Panc1 (cell line): ENCODE measurements at regions of chr1 and their contacts with region 1.

Region 1: DNA sequence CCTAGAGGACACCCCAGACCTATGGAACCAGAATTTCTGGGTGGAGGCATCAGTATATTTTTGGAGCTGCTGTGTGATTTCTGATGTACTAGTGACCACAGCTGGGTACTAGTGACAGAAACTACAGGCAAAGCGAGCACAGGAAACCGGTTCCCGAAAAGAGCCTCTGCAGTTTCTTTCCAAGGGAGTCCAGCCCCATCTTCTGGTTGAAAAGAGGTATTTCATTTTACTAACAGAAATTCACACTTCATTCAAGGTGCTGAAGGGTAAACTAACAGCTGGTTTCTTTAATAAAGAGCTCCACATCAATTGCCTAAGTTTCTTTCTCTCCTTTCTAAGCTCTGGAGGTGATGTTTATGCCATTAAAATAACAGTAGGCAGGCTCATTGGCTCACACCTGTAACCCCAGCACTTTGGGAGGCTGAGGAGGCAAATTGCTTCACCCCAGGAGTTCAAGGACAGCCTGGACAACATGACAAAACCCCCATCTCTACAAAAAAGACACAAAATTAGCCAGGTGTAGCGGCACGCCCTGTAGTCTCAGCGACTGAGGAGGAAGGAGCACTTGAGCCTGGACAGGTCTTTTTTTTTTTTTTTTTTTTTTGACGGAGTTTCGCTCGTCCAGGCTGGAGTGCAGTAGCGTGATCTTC is 22.0 kb downstream of the THAP3 start:
- DNase-seq: no peak
- ATAC-seq: peak; percentile 51; the same call in 1 of the 2 replicates
- H3K4me3 ChIP-seq: no peak overlapping the region
- H3K27ac ChIP-seq: no peak overlapping the region
- H3K4me1 ChIP-seq: no peaks in the 10 kb centered on the region
- H3K27me3 ChIP-seq: no peaks in the 10 kb centered on the region
- CTCF ChIP-seq: no peak

Region 2: DNA sequence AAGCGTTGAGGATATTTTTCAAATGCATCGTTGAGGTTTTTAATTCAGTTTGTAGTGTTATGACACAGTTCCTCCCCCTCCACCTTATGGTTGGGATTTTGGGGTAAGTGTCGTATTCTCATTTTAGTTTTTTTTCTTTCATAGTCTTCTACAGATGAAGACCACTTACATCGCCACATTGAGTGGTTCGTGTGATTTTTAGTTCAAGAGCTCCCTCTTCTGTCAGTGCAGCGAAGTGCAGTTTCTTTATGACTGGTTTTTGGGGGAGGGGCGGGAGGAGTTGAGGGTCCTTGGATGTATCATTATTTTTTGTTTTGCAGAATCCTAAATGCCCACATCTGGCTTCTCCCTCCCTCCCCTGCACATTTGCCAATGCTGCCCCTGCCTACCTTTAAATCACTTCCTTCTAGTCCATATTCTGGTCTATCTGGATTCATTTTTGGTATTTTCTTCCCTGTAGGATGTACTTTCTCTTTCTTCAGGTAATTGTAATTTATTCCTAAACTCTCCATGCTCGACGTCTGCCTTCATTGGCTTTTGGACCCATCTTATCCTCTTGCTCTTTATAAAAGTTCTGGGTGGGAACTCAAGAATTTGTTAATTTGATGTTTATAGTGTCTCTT is 571.7 kb after region 1 on chr1:
- CTCF ChIA-PET with region 1: no interaction called
- POLR2A ChIA-PET with region 1: interaction called, 14 read pairs
- in situ Hi-C with region 1: no loop called
- intact Hi-C with region 1: no loop called
- DNase-seq: no peak
- ATAC-seq: no peak
- H3K4me3 ChIP-seq: no peak overlapping the region
- H3K27ac ChIP-seq: no peak overlapping the region
- H3K4me1 ChIP-seq: no peaks in the 10 kb centered on the region
- H3K27me3 ChIP-seq: no peaks in the 10 kb centered on the region
- CTCF ChIP-seq: peak; percentile 88